CD14-positive monocyte (primary cell): ENCODE measurements at regions of chr2 and their contacts with region 1.

Region 1: GRCh38 chr2:38315707-38316333 is 61.3 kb downstream of the ATL2 start:
- DNase-seq: peak; percentile 19 to 54 (median 48)
- H3K4me3 ChIP-seq: no peak overlapping the region
- H3K4me3 Mint-ChIP-seq: no peak overlapping the region
- H3K27ac ChIP-seq: peak overlapping the region in 1 of 2 donors; percentile 13
- H3K27ac Mint-ChIP-seq: no peak overlapping the region
- H3K4me1 ChIP-seq: no peaks in the 10 kb centered on the region
- H3K4me1 Mint-ChIP-seq: no peaks in the 10 kb centered on the region
- H3K27me3 ChIP-seq: no peaks in the 10 kb centered on the region
- H3K27me3 Mint-ChIP-seq: no peaks in the 10 kb centered on the region
- CTCF ChIP-seq: peak; percentile 85

Region 2: GRCh38 chr2:38377050-38377828 is 61.4 kb after region 1 on chr2 and contains the start of gene ATL2:
- intact Hi-C with region 1: loop called in 1 of 2 experiments (anchors 10 kb)
- DNase-seq: peak; percentile 89 to 92 (median 89)
- H3K4me3 ChIP-seq: peak within 1 kb of the TSS; percentile 87 to 91 (median 88)
- H3K4me3 Mint-ChIP-seq: peak within 1 kb of the TSS; percentile 88 to 97
- H3K27ac ChIP-seq: peak within 1 kb of the TSS; percentile 91 to 92
- H3K27ac Mint-ChIP-seq: peak within 1 kb of the TSS; percentile 87 to 95 (median 93)
- H3K4me1 ChIP-seq: peaks cover 45 to 51% of the 10 kb centered on the region in 2 donors
- H3K4me1 Mint-ChIP-seq: peaks cover 45% of the 10 kb centered on the region
- H3K27me3 ChIP-seq: no peaks in the 10 kb centered on the region
- H3K27me3 Mint-ChIP-seq: no peaks in the 10 kb centered on the region
- CTCF ChIP-seq: no peak
- polyA plus RNA-seq, gene ATL2: 7.8 to 28.3 (median 10.8) TPM

Region 3: GRCh38 chr2:38508311-38509039 is 192.7 kb after region 1 on chr2:
- intact Hi-C with region 1: loop called (anchors 2 to 5 kb)
- DNase-seq: peak; percentile 74 to 86 (median 80)
- H3K4me3 ChIP-seq: no peak overlapping the region
- H3K4me3 Mint-ChIP-seq: no peak overlapping the region
- H3K27ac ChIP-seq: no peak overlapping the region
- H3K27ac Mint-ChIP-seq: peak overlapping the region in 3 of 7 donors; percentile 50 to 73 (median 64)
- H3K4me1 ChIP-seq: no peaks in the 10 kb centered on the region
- H3K4me1 Mint-ChIP-seq: peaks cover 10% of the 10 kb centered on the region
- H3K27me3 ChIP-seq: no peaks in the 10 kb centered on the region
- H3K27me3 Mint-ChIP-seq: peaks cover under 1 to 8% (median 4%) of the 10 kb centered on the region in 3 donors
- CTCF ChIP-seq: peak; percentile 78